Mucosa of descending colon (tissue), 3 donors: ENCODE measurements at regions of chr15 and their contacts with region 1.

Region 1: DNA sequence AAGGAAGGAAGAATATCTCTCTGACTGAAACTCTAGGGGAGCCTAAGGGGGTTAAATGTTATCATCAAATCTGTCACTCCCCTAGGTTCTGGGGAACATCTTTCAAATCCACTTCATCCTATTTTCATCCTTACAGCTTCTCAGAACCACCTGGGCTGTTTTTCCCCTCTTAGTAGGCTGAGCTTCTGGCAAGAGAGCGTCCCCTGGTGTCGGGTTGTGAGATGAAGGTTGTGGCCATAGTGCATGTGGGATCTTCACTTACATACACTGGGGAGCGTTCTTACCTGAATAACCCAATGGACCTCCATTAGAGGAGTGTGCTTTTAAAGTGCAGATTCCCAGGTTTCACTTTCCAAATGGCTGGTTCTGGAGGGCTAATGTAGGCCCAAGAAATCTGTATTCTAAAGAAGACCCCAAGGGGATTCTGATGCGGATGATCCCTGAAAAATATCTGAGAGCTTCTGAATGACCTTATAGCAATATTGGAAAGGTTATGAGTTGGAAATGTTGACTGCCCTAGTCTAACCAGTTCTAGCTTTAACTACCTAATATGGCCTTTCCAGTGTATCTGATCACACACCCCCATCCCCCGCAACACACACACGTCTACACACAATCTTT is 663.7 kb downstream of the AGBL1 start:
- DNase-seq: peak in 2 of 3 donors; percentile 76 to 87
- ATAC-seq: peak; percentile 82
- H3K4me3 ChIP-seq: no peak overlapping the region
- H3K4me1 ChIP-seq: no peaks in the 10 kb centered on the region
- CTCF ChIP-seq: peak; percentile 68

Region 2: DNA sequence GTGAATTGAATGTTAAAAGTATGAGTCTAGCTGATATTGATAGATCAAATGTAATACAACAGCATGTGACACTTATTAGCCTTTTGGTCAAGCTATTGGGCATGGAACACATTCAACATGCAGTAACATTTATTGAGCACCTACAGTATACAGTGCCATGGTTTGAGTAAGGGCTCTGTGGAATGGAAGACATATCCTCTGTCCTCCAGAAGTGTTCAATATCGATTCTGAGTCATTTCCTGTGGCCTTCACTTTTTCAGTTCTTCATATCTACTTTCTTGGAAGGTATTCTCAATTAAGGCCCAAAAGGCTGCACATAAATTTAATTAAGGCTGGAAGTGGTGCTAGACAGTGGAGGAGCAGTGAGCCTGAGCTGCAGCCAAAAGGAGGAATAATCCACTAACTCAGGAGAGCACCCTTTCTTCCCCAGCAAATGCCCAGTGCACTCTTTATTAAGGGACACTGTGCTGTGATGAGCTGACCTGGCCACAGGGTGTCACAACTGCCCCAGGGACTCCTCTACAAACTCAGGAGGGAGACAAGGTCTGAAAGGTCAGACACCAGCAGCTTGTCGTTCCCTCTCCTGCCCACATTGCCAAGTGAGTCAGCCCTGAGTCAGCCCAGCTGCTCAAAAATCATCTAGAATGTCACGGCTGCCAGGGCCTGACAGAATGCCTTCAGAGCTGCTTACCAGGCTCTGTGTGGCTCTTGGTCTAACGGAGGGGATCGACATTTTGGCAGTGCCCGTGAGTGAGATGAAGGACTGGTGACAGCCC is 118.9 kb before region 1 on chr15:
- intact Hi-C with region 1: loop called in 1 of 2 experiments (anchors 2 kb)
- DNase-seq: peak; percentile 71 to 80 (median 76)
- ATAC-seq: peak; percentile 96
- H3K4me3 ChIP-seq: no peak overlapping the region
- H3K4me1 ChIP-seq: peaks cover 16% of the 10 kb centered on the region
- CTCF ChIP-seq: peak; percentile 28